ENCODE measurements at regions of chr1 and their contacts with region 1.

Region 1: GRCh38 chr1:228471762-228472398 is 15.3 kb upstream of the RNF187 start:
- DNase-seq: peak; percentile 64
- ATAC-seq: peak; percentile 85
- H3K4me3 Mint-ChIP-seq: no peak overlapping the region
- H3K27ac Mint-ChIP-seq: peak overlapping the region; percentile 37
- H3K4me1 Mint-ChIP-seq: peaks cover 43% of the 10 kb centered on the region
- H3K27me3 Mint-ChIP-seq: peaks cover 7% of the 10 kb centered on the region

Region 2: DNA sequence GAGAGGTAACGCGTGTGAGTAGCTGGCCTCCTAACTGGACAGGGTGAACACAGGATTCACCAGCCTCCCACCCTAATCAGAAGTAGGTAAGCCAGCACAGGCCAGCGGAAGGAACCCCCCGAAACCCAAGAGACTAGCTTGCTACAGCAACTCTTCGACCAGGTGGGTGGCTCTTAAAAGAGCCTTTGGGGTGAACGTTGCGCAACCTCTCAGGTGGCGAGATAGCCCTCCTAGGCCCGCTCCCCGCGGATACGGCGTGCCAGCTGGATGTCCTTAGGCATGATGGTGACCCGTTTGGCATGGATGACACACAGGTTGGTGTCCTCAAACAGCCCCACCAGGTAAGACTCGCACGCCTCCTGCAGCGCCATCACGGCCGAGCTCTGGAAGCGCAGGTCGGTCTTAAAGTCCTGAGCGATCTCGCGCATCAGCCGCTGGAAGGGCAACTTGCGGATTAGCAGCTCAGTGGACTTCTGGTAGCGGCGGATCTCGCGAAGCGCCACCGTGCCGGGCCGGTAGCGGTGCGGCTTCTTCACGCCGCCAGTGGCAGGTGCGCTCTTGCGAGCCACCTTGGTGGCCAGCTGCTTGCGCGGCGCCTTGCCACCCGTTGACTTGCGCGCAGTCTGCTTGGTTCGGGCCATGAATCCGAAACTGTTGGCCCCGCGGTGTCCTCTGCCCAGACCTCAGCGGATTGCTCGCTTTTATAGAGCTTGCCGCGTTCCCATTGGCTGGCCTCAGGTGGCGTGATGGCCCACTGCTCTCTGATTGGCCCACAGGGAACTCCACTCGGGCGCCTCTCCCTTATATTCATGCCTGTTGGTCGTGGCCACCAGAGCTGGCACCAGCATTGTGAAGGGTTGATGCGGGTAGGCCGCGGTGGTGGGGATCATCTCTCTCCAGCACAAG is 46.9 kb before region 1 on chr1:
- CTCF ChIA-PET with region 1: no interaction called
- POLR2A ChIA-PET with region 1: no interaction called
- DNase-seq: no peak
- ATAC-seq: no peak
- H3K4me3 Mint-ChIP-seq: no peak overlapping the region
- H3K27ac Mint-ChIP-seq: no peak overlapping the region
- H3K4me1 Mint-ChIP-seq: peaks cover 7% of the 10 kb centered on the region
- H3K27me3 Mint-ChIP-seq: peaks cover 20% of the 10 kb centered on the region

Region 3: GRCh38 chr1:228515200-228515834 is 43.4 kb after region 1 on chr1:
- CTCF ChIA-PET with region 1: interaction called, 26 read pairs
- POLR2A ChIA-PET with region 1: no interaction called
- DNase-seq: peak; percentile 54
- ATAC-seq: peak; percentile 54
- H3K4me3 Mint-ChIP-seq: no peak overlapping the region
- H3K27ac Mint-ChIP-seq: no peak overlapping the region
- H3K4me1 Mint-ChIP-seq: peaks cover 33% of the 10 kb centered on the region
- H3K27me3 Mint-ChIP-seq: peaks cover 53% of the 10 kb centered on the region

Region 4: GRCh38 chr1:228526756-228527155 is 54.9 kb after region 1 on chr1:
- CTCF ChIA-PET with region 1: no interaction called
- POLR2A ChIA-PET with region 1: no interaction called
- DNase-seq: no peak
- ATAC-seq: no peak
- H3K4me3 Mint-ChIP-seq: no peak overlapping the region
- H3K27ac Mint-ChIP-seq: no peak overlapping the region
- H3K4me1 Mint-ChIP-seq: no peaks in the 10 kb centered on the region
- H3K27me3 Mint-ChIP-seq: peaks cover 20% of the 10 kb centered on the region

Measured in activated CD8-positive, alpha-beta T cell treated with anti-CD3 and anti-CD28 coated beads, Interleukin-2, amount 10 ng/mL, durations not matched to agents 7 days and 5 days (primary cell).